ENCODE measurements at regions of chr13 and their contacts with region 1.

Region 1: GRCh38 chr13:98445340-98446233 is 131.3 kb downstream of the STK24 start:
- DNase-seq: peak; percentile 69 to 82
- H3K4me3 ChIP-seq: no peak overlapping the region
- H3K27ac ChIP-seq: peak overlapping the region; percentile 42 to 54
- H3K4me1 ChIP-seq: peaks cover 0 to 26% (median 19%) of the 10 kb centered on the region in 4 donors
- H3K27me3 ChIP-seq: no peaks in the 10 kb centered on the region
- CTCF ChIP-seq: peak; percentile 93 to 98

Region 2: GRCh38 chr13:98648141-98648540 is 202.6 kb after region 1 on chr13:
- intact Hi-C with region 1: loop called (anchors 2 kb)
- DNase-seq: no peak
- H3K4me3 ChIP-seq: no peak overlapping the region
- H3K27ac ChIP-seq: no peak overlapping the region
- H3K4me1 ChIP-seq: no peaks in the 10 kb centered on the region
- H3K27me3 ChIP-seq: peaks cover 0 to 2% of the 10 kb centered on the region in 2 donors
- CTCF ChIP-seq: no peak

Measured in tibial artery (tissue), 4 donors.